Activated B cell treated with CpG ODN at 0.5 μM for 24 hours (primary cell): ENCODE measurements at regions of chr1 and their contacts with region 1.

Region 1: DNA sequence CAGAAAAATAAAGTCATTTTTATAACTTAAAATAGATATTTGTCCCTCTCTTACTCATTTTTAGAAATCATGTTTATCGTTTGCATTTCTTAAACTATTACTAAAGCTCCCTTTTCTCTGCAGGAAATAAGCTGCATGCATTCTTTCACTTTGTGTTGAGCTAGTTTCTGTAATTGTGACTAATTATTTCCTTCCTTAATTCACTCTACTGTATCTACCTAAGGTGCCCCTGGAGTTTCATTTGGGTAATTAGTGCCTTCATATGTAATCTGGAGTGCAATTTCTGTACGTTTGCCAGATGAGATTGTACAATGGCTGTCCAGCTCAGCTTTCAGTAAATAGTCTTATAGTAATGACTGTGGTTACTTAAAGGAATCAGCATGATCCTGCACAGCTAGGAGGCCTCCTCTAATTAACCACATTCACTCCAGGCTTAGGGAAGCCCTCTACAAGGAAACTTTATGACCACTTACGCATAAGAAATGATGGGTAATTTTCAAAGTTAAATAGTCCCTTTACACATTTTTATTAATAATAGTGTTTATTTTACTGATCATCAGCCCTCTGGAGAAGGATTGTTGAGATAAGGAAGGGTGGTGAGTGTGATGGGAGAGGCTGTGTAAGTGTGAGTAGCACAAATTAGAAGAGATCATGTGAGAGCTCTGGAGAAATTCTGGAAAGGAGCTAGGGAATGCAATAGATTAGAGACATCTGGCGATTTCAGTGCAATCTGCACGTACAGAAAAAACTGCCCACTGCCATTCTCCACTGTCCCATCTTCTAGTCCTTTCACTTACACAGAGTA is 86.8 kb downstream of the LRRC8C start:
- DNase-seq: no peak
- ATAC-seq: peak; percentile 92
- H3K4me3 Mint-ChIP-seq: peak overlapping the region; percentile 72
- H3K27ac Mint-ChIP-seq: peak overlapping the region; percentile 96
- H3K4me1 Mint-ChIP-seq: peaks cover 56% of the 10 kb centered on the region
- H3K27me3 Mint-ChIP-seq: no peaks in the 10 kb centered on the region
- CTCF ChIP-seq: no peak

Region 2: DNA sequence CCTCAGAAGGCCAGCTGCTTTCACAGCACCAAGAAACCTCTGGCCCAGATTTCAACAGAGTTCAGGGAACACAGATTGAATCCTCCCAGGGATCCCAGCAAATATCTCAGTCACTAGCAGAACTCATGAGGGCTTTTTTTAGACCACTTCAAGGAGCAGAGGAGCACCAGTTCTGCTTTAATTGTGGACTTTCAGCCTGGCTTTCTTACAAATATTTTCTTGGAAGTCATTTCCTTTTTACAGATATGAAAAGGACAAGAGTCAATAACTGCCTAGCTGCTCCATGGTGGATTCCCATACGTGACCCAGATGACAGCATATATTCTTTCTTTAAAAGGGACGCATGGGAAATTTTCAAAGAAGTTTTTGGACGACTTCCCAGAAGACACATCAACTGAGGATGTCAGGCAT is 201.5 kb before region 1 on chr1:
- CTCF ChIA-PET with region 1: no interaction called
- POLR2A ChIA-PET with region 1: no interaction called
- intact Hi-C with region 1: no loop called
- DNase-seq: no peak
- ATAC-seq: no peak
- H3K4me3 Mint-ChIP-seq: no peak overlapping the region
- H3K27ac Mint-ChIP-seq: no peak overlapping the region
- H3K4me1 Mint-ChIP-seq: peaks cover 10% of the 10 kb centered on the region
- H3K27me3 Mint-ChIP-seq: no peaks in the 10 kb centered on the region
- CTCF ChIP-seq: no peak

Region 3: DNA sequence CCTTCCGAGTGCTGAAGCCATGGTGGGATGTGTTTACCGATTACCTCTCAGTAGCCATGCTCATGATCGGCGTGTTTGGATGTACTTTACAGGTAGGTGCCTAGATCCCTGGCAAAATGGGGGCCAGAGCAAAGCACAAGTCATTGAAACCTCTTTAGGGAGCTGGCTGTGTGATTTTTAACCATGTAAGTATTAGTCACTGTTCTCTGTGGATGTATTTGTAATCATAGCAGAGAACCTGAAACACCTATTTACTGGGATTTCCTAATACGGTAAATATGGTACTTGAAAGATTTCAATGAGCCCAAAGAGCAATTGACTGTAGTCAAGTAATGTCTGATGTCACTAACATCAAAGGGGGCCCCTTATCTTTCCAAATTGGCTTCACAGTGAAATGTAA is 33.2 kb before region 1 on chr1:
- CTCF ChIA-PET with region 1: no interaction called
- POLR2A ChIA-PET with region 1: no interaction called
- intact Hi-C with region 1: no loop called
- DNase-seq: no peak
- ATAC-seq: no peak
- H3K4me3 Mint-ChIP-seq: no peak overlapping the region
- H3K27ac Mint-ChIP-seq: no peak overlapping the region
- H3K4me1 Mint-ChIP-seq: peaks cover 10% of the 10 kb centered on the region
- H3K27me3 Mint-ChIP-seq: no peaks in the 10 kb centered on the region
- CTCF ChIP-seq: no peak

Region 4: DNA sequence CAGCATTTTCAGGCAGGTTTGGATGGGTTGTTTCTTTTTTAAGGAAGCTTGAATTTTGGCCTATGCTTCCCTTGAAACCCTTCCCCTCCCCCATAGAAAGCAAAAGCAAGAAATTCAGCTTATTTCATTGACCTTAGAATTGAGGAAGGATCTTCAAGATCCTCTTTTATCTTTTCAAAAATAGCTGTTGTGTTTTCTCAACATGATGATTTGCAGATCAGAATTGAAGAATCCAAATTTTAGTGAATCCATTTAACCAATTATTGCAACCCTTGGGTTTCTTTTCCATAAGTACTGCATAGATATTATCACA is 13.0 kb before region 1 on chr1:
- CTCF ChIA-PET with region 1: interaction called, 6 read pairs
- POLR2A ChIA-PET with region 1: interaction called, 5 read pairs
- intact Hi-C with region 1: loop called (anchors 1 kb)
- DNase-seq: no peak
- ATAC-seq: peak; percentile 47
- H3K4me3 Mint-ChIP-seq: peak overlapping the region; percentile 51
- H3K27ac Mint-ChIP-seq: peak overlapping the region; percentile 78
- H3K4me1 Mint-ChIP-seq: peaks cover 40% of the 10 kb centered on the region
- H3K27me3 Mint-ChIP-seq: no peaks in the 10 kb centered on the region
- CTCF ChIP-seq: no peak

Region 5: GRCh38 chr1:89791064-89791726 is 71.5 kb after region 1 on chr1:
- CTCF ChIA-PET with region 1: no interaction called
- POLR2A ChIA-PET with region 1: no interaction called
- intact Hi-C with region 1: no loop called
- DNase-seq: no peak
- ATAC-seq: no peak
- H3K4me3 Mint-ChIP-seq: no peak overlapping the region
- H3K27ac Mint-ChIP-seq: no peak overlapping the region
- H3K4me1 Mint-ChIP-seq: no peaks in the 10 kb centered on the region
- H3K27me3 Mint-ChIP-seq: no peaks in the 10 kb centered on the region
- CTCF ChIP-seq: no peak